ENCODE measurements at regions of chr22 and their contacts with region 1.

Region 1: GRCh38 chr22:20803696-20804324 is 29.9 kb downstream of the SERPIND1 start:
- DNase-seq: peak; percentile 44
- ATAC-seq: peak; percentile 54
- H3K4me3 ChIP-seq: no peak overlapping the region
- H3K27ac ChIP-seq: no peak overlapping the region
- H3K4me1 ChIP-seq: peaks cover 7% of the 10 kb centered on the region
- H3K27me3 ChIP-seq: no peaks in the 10 kb centered on the region
- CTCF ChIP-seq: peak; percentile 60
- POLR2A ChIP-seq: no peak
- RAD21 ChIP-seq: peak; percentile 71

Region 2: DNA sequence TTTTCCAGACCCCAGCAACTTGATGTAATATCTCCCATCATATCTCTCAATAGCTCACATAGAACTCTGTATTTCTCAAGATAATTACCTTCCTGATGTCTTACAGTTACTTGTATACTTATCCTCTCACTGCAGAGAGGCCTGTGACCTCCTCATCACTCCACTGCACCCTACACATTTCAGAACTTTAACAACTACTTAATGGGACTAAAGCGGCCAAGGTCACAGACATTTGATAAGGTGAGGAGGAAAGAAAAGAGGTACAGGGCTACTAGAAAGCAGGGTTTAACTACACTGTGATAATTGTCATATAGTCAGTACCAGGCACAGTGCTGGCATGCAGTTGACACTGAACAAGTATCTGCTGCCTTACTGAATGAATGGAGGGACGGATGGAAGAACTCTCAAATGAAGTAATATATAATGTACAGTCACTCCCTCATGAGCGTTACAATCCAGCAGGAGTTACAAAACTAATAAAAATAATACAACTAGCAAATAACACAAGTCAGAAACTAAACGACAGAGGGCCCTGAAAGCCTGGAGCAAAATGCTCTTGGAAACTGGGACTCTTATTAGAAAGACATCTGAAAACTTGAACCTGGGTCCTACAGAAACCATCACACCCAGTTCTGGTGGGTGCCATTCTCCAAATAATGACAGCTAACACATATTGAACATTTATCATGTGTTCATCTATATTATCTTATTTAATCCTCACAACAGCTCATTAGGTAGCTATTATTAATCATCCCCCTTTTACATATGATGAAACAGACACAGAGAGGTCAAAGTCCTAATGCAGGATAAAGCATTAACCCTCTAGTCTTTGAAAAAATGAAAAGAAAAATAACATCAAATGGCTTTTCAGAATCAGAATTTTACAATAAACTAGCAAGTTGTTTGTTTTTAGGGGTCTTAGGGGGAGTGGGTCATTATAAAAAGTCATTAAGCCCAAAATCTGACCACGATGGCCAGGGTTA is 40.5 kb after region 1 on chr22:
- CTCF ChIA-PET with region 1: no interaction called
- POLR2A ChIA-PET with region 1: no interaction called
- dilution Hi-C with region 1: no loop called
- in situ Hi-C with region 1: loop called (anchors 5 kb)
- intact Hi-C with region 1: no loop called
- DNase-seq: no peak
- ATAC-seq: no peak
- H3K4me3 ChIP-seq: no peak overlapping the region
- H3K27ac ChIP-seq: no peak overlapping the region
- H3K4me1 ChIP-seq: peaks cover 8% of the 10 kb centered on the region
- H3K27me3 ChIP-seq: no peaks in the 10 kb centered on the region
- CTCF ChIP-seq: no peak
- POLR2A ChIP-seq: no peak
- RAD21 ChIP-seq: no peak

Region 3: GRCh38 chr22:20852076-20852475 is 48.3 kb after region 1 on chr22:
- CTCF ChIA-PET with region 1: interaction called, 5 read pairs
- POLR2A ChIA-PET with region 1: no interaction called
- dilution Hi-C with region 1: no loop called
- in situ Hi-C with region 1: loop called (anchors 5 kb)
- intact Hi-C with region 1: loop called (anchors 5 kb)
- DNase-seq: no peak
- ATAC-seq: no peak
- H3K4me3 ChIP-seq: no peak overlapping the region
- H3K27ac ChIP-seq: no peak overlapping the region
- H3K4me1 ChIP-seq: peaks cover 3% of the 10 kb centered on the region
- H3K27me3 ChIP-seq: no peaks in the 10 kb centered on the region
- CTCF ChIP-seq: no peak
- POLR2A ChIP-seq: no peak
- RAD21 ChIP-seq: no peak

Region 4: DNA sequence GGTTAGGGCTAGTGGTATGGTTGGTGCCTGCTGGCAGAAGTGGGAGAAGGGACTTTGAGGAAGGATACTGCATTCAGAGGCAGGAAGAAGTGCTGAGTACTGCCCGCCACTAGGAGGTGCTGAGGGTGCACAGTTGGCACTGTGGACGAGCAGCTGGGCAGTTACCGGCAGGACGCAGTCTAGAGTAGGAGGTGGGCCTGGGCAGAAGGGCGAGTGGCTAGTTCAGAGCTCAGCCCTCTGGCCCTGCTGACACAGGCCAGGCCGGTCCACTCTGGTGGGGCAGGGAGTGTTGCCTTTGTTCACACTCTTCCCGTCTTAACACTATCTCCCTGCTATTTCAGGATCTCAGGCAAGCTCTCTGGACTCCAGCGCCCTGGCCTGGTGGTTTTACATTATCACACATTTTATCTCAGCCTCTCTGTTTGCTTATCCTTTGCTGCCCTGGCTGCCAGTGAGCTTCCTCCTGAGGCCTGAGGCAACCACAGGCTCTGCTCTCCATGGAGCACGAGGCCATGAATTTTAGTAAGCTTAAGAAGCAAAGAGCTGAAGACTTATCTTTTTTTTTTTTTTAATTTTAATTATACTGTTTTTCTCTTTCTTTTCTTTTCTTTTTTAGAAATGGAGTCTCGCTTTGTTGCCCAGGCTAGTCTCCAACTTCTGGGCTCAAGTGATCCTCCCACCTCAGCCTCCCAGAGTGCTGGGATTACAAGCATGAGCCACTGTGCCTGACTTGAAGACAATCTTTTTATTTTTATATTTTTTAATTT is 81.9 kb after region 1 on chr22:
- CTCF ChIA-PET with region 1: interaction called, 11 read pairs
- POLR2A ChIA-PET with region 1: no interaction called
- dilution Hi-C with region 1: no loop called
- in situ Hi-C with region 1: no loop called
- intact Hi-C with region 1: loop called (anchors 1 kb)
- DNase-seq: peak; percentile 82
- ATAC-seq: peak; percentile 99
- H3K4me3 ChIP-seq: no peak overlapping the region
- H3K27ac ChIP-seq: peak overlapping the region; percentile 41
- H3K4me1 ChIP-seq: peaks cover 5% of the 10 kb centered on the region
- H3K27me3 ChIP-seq: no peaks in the 10 kb centered on the region
- CTCF ChIP-seq: peak; percentile 96
- POLR2A ChIP-seq: no peak; the same call in 1 of the 2 replicates
- RAD21 ChIP-seq: peak; percentile 96

Region 5: GRCh38 chr22:20916983-20917810 is 113.4 kb after region 1 on chr22 and contains the start of gene CRKL:
- CTCF ChIA-PET with region 1: no interaction called
- POLR2A ChIA-PET with region 1: no interaction called
- dilution Hi-C with region 1: no loop called
- in situ Hi-C with region 1: no loop called
- intact Hi-C with region 1: loop called (anchors 10 kb)
- DNase-seq: peak; percentile 97
- ATAC-seq: peak; percentile 99
- H3K4me3 ChIP-seq: peak within 1 kb of the TSS; percentile 87
- H3K27ac ChIP-seq: peak within 1 kb of the TSS; percentile 93
- H3K4me1 ChIP-seq: 0 out of 2 replicates have a peak, but pooled peaks cover 6% of the 10 kb centered on the region
- H3K27me3 ChIP-seq: no peaks in the 10 kb centered on the region
- CTCF ChIP-seq: peak; percentile 98
- POLR2A ChIP-seq: no peak
- RAD21 ChIP-seq: peak; percentile 62
- total RNA-seq, gene CRKL: 35.5 and 35.8 TPM in 2 replicates

Region 6: DNA sequence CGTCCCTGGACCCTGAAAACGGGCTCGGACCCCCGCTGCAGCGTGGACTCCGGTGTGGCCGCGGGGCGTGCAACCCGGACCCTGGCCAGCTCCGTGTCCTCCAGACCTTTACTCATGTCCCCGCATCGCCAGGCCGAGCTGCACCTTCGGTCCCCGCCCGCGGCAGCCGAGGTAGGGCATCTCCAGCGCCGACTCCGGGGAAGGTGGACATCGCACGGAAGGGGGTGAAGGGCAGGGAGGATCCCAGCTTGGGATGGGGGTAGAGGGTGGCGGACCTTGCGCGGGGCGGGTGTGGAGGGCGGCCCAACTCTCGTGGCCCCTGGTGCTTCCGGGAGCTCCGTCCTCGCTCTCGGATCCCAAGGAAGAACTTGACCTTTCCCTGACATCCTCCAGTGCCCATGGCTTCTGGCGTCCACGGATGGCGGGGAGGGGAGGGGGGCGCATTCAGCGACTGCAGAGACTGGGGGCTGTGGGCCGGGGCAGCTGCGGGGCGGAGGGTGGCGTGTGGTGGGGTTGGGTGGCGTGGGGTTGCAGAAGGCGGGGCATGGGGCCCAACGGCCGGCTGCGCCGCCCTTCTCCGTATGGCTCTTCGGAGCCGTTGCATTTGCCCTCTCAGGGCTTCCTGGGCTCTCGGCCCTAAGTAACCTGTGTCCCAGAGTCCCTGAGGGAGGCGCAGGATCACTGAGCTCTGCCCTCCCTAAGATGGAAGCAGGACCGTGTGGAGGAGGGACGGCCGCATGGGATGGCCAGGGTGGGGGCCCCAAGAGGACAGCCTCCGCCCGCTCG is 153.7 kb after region 1 on chr22:
- CTCF ChIA-PET with region 1: interaction called, 4 read pairs
- POLR2A ChIA-PET with region 1: no interaction called
- dilution Hi-C with region 1: no loop called
- in situ Hi-C with region 1: no loop called
- intact Hi-C with region 1: loop called (anchors 10 kb)
- DNase-seq: no peak
- ATAC-seq: peak; percentile 50
- H3K4me3 ChIP-seq: peak overlapping the region; percentile 51
- H3K27ac ChIP-seq: no peak overlapping the region; the same call in 1 of the 2 replicates
- H3K4me1 ChIP-seq: peaks cover 6% of the 10 kb centered on the region; the same call in 1 of the 2 replicates
- H3K27me3 ChIP-seq: no peaks in the 10 kb centered on the region
- CTCF ChIP-seq: no peak
- POLR2A ChIP-seq: no peak
- RAD21 ChIP-seq: no peak

Region 7: GRCh38 chr22:20981787-20982562 is 178.2 kb after region 1 on chr22 and contains the start of gene LZTR1:
- CTCF ChIA-PET with region 1: no interaction called
- POLR2A ChIA-PET with region 1: no interaction called
- dilution Hi-C with region 1: no loop called
- in situ Hi-C with region 1: no loop called
- intact Hi-C with region 1: loop called (anchors 1 kb)
- DNase-seq: peak; percentile 82
- ATAC-seq: peak; percentile 95
- H3K4me3 ChIP-seq: peak within 1 kb of the TSS; percentile 87
- H3K27ac ChIP-seq: peak within 1 kb of the TSS; percentile 91
- H3K4me1 ChIP-seq: peaks cover 11% of the 10 kb centered on the region
- H3K27me3 ChIP-seq: no peaks in the 10 kb centered on the region
- CTCF ChIP-seq: peak; percentile 71
- POLR2A ChIP-seq: peak; percentile 85
- RAD21 ChIP-seq: peak; percentile 64
- total RNA-seq, gene LZTR1: 19.2 and 22.8 TPM in 2 replicates